Heart right ventricle (tissue), 16 donors: ENCODE measurements at regions of chr5 and their contacts with region 1.

Region 1: DNA sequence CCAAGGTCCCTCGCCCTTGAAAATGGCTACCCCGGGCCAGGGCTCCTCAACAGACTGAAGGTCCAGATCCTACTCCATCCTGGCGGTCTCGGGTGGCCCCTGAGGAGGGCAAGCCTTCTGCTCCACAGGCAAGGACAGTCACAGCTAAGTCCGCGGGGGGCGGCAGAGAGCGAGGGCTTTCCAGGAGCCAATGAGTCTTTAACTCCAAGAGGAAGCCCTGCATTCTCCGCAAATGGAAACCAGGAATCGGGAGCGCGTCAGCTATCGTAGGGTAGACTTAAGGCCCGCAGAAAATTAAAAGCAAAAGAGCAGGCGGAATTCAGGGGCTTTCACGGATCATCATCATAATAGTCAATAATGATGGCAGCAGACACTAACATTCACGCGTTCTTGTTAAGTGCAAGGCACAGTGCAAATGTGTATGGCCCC is 87.8 kb upstream of the TNFAIP8 start:
- DNase-seq: peak; percentile 92 to 94
- ATAC-seq: peak; percentile 90 to 96 (median 94)
- H3K4me3 ChIP-seq: peak overlapping the region; percentile 56 to 96 (median 82)
- H3K27ac ChIP-seq: peak overlapping the region; percentile 76 to 95 (median 93)
- H3K4me1 ChIP-seq: peaks cover 0 to 44% (median 11%) of the 10 kb centered on the region in 9 donors
- H3K27me3 ChIP-seq: no peaks in the 10 kb centered on the region
- CTCF ChIP-seq: peak in 8 of 9 donors; percentile 22 to 97 (median 61)

Region 2: GRCh38 chr5:118628660-118629354 is 639.2 kb before region 1 on chr5:
- intact Hi-C with region 1: no loop called
- DNase-seq: no peak
- ATAC-seq: peak in 2 of 8 donors; percentile 16 to 68
- H3K4me3 ChIP-seq: no peak overlapping the region
- H3K27ac ChIP-seq: no peak overlapping the region
- H3K4me1 ChIP-seq: no peaks in the 10 kb centered on the region
- H3K27me3 ChIP-seq: no peaks in the 10 kb centered on the region
- CTCF ChIP-seq: peak in 2 of 9 donors; percentile 14 to 22

Region 3: GRCh38 chr5:119070828-119071572 is 197.0 kb before region 1 on chr5 and contains the start of gene DMXL1:
- intact Hi-C with region 1: loop called in 2 of 10 experiments (anchors 1 to 5 kb)
- DNase-seq: peak; percentile 99 to 100
- ATAC-seq: peak; percentile 97 to 99 (median 98)
- H3K4me3 ChIP-seq: peak within 1 kb of the TSS; percentile 50 to 99 (median 90)
- H3K27ac ChIP-seq: peak within 1 kb of the TSS; percentile 92 to 97 (median 94)
- H3K4me1 ChIP-seq: peaks cover 3 to 43% (median 31%) of the 10 kb centered on the region in 9 donors
- H3K27me3 ChIP-seq: no peaks in the 10 kb centered on the region
- CTCF ChIP-seq: no peak
- total RNA-seq, gene DMXL1: 19.7 to 36.5 (median 26.7) TPM

Region 4: GRCh38 chr5:119328753-119329602 is 61.0 kb after region 1 on chr5:
- intact Hi-C with region 1: loop called in 6 of 10 experiments (anchors 2 to 10 kb)
- DNase-seq: no peak
- ATAC-seq: no peak
- H3K4me3 ChIP-seq: no peak overlapping the region
- H3K27ac ChIP-seq: peak overlapping the region in 1 of 10 donors; percentile 84
- H3K4me1 ChIP-seq: peaks cover 0 to 98% (median 6%) of the 10 kb centered on the region in 9 donors
- H3K27me3 ChIP-seq: no peaks in the 10 kb centered on the region
- CTCF ChIP-seq: no peak

Region 5: DNA sequence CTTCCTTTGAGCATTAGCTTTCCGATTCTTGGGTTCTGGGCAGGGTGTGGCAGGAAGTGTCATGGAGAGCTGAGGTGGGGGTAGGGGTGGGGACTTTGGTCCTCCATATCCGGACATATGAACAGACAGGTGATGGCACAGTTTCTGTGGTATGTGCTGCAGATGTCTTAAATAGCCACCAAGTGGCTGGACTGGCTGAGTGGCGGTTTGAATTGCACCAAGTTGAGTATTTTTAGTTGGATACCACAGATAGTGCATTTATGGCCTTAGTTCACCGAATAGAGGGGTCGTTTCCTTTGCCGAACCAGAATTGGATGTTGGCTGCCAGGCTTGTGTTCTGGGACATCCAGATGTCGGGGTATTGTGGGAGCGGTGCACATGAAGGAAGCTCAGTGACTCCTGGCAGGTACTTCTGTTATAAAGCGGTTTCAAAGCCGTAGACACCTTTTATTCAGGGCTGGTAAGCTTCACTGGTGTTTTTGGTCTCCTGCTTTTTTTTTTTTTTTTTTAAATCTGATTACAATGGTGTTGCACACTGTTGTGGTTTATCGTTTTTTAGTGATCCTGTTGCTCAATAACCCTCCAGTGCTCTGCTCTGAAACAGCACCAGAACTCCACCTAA is 72.7 kb after region 1 on chr5:
- intact Hi-C with region 1: loop called in 5 of 10 experiments (anchors 2 to 10 kb)
- DNase-seq: no peak
- ATAC-seq: peak in 2 of 8 donors; percentile 14 to 28
- H3K4me3 ChIP-seq: peak overlapping the region in 1 of 10 donors; percentile 26
- H3K27ac ChIP-seq: peak overlapping the region in 1 of 10 donors; percentile 79
- H3K4me1 ChIP-seq: peaks cover 0 to 98% (median 13%) of the 10 kb centered on the region in 9 donors
- H3K27me3 ChIP-seq: no peaks in the 10 kb centered on the region
- CTCF ChIP-seq: no peak

Region 6: GRCh38 chr5:119386596-119387344 is 118.8 kb after region 1 on chr5:
- intact Hi-C with region 1: no loop called
- DNase-seq: peak in 1 of 2 donors; percentile 61
- ATAC-seq: peak in 6 of 8 donors; percentile 57 to 73 (median 67)
- H3K4me3 ChIP-seq: no peak overlapping the region
- H3K27ac ChIP-seq: peak overlapping the region in 6 of 10 donors; percentile 3 to 54 (median 33)
- H3K4me1 ChIP-seq: peaks cover 0 to 96% (median 21%) of the 10 kb centered on the region in 9 donors
- H3K27me3 ChIP-seq: no peaks in the 10 kb centered on the region
- CTCF ChIP-seq: no peak